ENCODE measurements at regions of chr3 and their contacts with region 1.

Region 1: GRCh38 chr3:120795017-120795648 is 52.6 kb downstream of the GTF2E1 start:
- DNase-seq: peak; percentile 87
- H3K4me3 Mint-ChIP-seq: no peak overlapping the region
- H3K27ac Mint-ChIP-seq: no peak overlapping the region
- H3K4me1 Mint-ChIP-seq: peaks cover 6% of the 10 kb centered on the region
- H3K27me3 Mint-ChIP-seq: no peaks in the 10 kb centered on the region

Region 2: GRCh38 chr3:120558771-120559241 is 236.3 kb before region 1 on chr3:
- CTCF ChIA-PET with region 1: interaction called, 116 read pairs
- POLR2A ChIA-PET with region 1: no interaction called
- intact Hi-C with region 1: loop called (anchors 1 kb)
- DNase-seq: peak; percentile 90
- H3K4me3 Mint-ChIP-seq: peak overlapping the region; percentile 73
- H3K27ac Mint-ChIP-seq: peak overlapping the region; percentile 30
- H3K4me1 Mint-ChIP-seq: peaks cover 15% of the 10 kb centered on the region
- H3K27me3 Mint-ChIP-seq: peaks cover 2% of the 10 kb centered on the region

Region 3: GRCh38 chr3:120567370-120568201 is 227.5 kb before region 1 on chr3:
- CTCF ChIA-PET with region 1: interaction called, 19 read pairs
- POLR2A ChIA-PET with region 1: interaction called, 4 read pairs
- intact Hi-C with region 1: no loop called
- DNase-seq: no peak
- H3K4me3 Mint-ChIP-seq: no peak overlapping the region
- H3K27ac Mint-ChIP-seq: no peak overlapping the region
- H3K4me1 Mint-ChIP-seq: peaks cover 2% of the 10 kb centered on the region
- H3K27me3 Mint-ChIP-seq: peaks cover 2% of the 10 kb centered on the region

Region 4: DNA sequence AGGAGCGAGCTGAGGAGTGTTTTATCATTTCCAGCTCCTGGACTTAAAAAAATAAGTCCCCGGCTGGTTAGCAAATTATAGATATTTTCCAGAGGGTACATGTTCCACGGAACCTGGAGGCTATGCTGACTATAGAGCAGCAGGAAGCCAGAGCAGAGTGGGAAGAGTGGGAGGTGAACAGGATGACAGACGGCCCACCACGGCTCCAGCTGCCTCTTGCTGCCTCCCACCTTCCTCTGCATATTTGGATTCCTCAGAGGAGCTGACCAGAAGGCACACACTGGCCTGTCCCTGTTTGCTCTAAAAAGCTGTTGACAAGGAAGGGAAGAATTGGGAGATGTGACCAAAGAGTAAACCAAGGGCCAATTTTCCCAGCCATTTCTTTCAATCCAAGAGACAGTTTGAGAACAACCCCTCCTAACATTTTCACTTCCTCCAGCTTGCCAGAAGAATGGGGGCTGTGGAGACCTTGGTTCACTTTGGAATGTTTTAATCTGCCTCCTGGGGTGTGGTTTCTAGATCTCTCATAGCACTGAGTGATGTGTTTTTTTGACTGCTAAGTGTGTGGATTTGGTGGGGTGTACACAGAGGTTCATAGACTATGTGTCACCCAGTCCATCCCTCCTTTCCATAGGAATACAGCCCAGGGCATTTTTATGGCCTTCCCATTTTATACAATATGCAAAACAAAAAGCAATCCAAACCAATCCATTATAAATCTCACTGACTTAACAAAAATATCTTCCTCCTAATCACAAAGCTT is 149.9 kb before region 1 on chr3:
- CTCF ChIA-PET with region 1: no interaction called
- POLR2A ChIA-PET with region 1: no interaction called
- intact Hi-C with region 1: no loop called
- DNase-seq: no peak
- H3K4me3 Mint-ChIP-seq: no peak overlapping the region
- H3K27ac Mint-ChIP-seq: no peak overlapping the region
- H3K4me1 Mint-ChIP-seq: peaks cover 7% of the 10 kb centered on the region
- H3K27me3 Mint-ChIP-seq: no peaks in the 10 kb centered on the region

Region 5: DNA sequence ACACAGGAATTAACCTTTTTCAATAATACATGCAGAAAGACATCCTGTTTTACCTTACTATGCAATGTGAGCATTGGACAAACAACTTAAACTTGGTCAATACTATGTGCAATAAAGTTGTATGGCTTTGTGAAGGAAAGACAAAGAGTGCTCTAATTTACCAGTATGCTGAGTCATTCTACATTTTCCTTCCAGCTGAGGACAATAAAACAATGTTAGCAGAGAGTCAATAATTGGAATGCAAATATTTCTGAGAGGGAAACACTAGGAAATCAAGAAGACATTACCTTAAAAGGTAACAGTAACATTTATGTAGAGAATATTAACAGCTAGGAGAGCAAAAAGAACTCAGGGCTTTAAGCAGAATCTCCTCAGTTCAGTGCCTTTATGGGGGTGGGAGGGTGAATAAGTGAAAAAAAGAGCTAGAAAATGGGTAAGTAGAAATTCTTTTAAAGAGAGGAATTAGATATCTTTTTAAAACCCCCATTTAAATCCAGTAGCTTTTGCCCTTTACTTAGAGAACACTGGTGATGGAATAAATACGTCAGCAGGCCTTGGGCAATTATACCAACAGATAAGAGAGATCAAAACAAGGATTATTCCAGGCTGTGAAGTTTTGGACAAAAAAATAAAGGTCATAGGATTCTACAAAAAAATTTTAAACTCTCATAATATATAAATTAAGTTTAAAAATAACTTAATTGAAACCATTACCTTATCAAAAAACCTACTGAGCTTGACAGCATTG is 101.5 kb before region 1 on chr3:
- CTCF ChIA-PET with region 1: no interaction called
- POLR2A ChIA-PET with region 1: no interaction called
- intact Hi-C with region 1: no loop called
- DNase-seq: no peak
- H3K4me3 Mint-ChIP-seq: no peak overlapping the region
- H3K27ac Mint-ChIP-seq: no peak overlapping the region
- H3K4me1 Mint-ChIP-seq: peaks cover 4% of the 10 kb centered on the region
- H3K27me3 Mint-ChIP-seq: no peaks in the 10 kb centered on the region

Region 6: DNA sequence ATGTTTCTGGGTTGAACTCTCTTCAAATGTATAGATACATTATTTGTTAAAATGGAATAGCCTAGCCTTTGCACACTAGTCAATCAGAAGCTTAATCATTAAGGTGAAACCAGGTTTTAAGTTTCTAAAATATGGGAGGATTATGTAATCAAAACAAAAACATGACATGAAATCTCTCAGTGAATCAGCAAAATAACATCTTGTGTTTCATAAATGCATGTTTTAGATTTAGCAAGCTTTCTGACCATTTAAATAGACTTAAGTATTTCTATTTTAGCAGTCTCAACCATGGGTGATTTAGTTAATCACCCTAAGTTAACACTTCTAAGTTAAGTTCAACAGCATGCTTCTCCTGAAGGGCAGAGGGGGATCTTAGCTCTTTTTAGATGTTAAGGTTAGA is 41.3 kb before region 1 on chr3:
- CTCF ChIA-PET with region 1: no interaction called
- POLR2A ChIA-PET with region 1: no interaction called
- intact Hi-C with region 1: no loop called
- DNase-seq: no peak
- H3K4me3 Mint-ChIP-seq: no peak overlapping the region
- H3K27ac Mint-ChIP-seq: no peak overlapping the region
- H3K4me1 Mint-ChIP-seq: peaks cover 23% of the 10 kb centered on the region
- H3K27me3 Mint-ChIP-seq: no peaks in the 10 kb centered on the region

Region 7: DNA sequence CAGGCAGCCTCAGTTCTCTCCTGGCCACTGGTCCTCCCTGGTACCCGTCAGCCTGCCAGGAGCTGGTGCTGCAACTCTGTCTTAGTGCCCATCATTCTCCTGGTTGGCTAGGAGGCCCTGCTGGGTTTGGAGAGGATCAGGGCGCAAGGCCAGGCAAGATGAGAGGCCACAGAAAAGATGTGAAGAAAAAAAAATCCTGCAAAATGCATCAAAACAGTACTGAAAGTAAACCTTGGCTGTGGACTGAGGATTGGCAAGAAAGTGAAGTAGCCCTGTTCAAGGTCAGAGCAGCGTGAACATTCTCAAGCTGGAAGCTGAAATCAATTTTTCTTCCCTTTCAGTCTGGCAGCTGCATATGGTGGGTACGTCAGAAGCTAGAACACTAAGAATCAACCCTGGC is 21.6 kb after region 1 on chr3:
- CTCF ChIA-PET with region 1: interaction called, 10 read pairs
- POLR2A ChIA-PET with region 1: no interaction called
- intact Hi-C with region 1: no loop called
- DNase-seq: no peak
- H3K4me3 Mint-ChIP-seq: no peak overlapping the region
- H3K27ac Mint-ChIP-seq: no peak overlapping the region
- H3K4me1 Mint-ChIP-seq: no peaks in the 10 kb centered on the region
- H3K27me3 Mint-ChIP-seq: peaks cover 11% of the 10 kb centered on the region